ENCODE measurements at regions of chr20 and their contacts with region 1.

Region 1: DNA sequence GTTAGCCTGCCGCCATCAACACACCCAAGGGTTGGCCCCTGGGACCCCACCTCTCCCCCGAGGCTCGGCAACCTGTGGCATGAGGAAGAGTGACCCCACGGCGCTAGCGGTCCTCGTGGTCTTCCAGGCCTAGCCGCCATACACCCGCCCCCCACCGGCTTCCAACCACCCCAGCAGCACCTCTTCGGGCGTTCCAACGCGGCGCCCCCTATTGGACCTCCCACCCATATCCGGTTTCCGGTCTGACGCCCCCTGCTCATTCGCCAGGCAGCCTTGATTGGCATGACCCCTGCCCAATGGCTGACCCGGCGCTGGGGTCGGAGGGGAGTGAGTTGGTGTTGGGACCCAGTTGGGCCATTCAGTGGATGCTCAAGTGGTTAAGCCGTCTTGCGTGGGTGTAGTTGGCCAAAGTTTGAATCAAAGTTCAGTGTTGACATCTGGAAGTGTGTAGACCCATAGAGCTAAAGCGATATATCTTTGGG is at the start of gene GNAS-AS1:
- DNase-seq: peak; percentile 82
- H3K4me3 ChIP-seq: peak within 1 kb of the TSS; percentile 82
- H3K27ac ChIP-seq: no peak within 1 kb of the TSS
- H3K4me1 ChIP-seq: peaks cover 3% of the 10 kb centered on the region; the same call in 1 of the 2 replicates
- H3K27me3 ChIP-seq: no peaks in the 10 kb centered on the region
- total RNA-seq, gene GNAS-AS1: 0.25 and 0.97 TPM in 2 replicates

Region 2: DNA sequence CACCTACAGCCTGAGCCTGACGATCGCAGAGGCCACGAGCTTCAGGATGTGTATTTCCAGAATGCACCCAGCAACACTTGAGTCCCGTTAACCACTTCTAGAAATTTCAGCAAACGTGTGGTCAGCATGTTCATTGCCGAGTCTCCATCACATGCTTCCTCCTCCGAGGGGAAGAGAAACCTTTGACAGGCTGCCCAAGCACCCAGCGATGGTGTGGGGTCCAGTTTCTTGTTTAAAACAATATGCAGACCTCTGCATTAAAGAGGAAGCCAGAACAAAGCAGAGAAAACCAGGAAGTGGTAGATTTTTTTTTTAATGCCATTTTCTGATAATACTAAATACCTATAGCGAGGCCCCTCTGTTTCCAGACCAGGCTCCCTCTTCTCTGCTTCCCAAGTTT is 72.0 kb before region 1 on chr20:
- in situ Hi-C with region 1: no loop called
- DNase-seq: no peak
- H3K4me3 ChIP-seq: no peak overlapping the region
- H3K27ac ChIP-seq: no peak overlapping the region
- H3K4me1 ChIP-seq: no peaks in the 10 kb centered on the region
- H3K27me3 ChIP-seq: peaks cover 49% of the 10 kb centered on the region

Region 3: DNA sequence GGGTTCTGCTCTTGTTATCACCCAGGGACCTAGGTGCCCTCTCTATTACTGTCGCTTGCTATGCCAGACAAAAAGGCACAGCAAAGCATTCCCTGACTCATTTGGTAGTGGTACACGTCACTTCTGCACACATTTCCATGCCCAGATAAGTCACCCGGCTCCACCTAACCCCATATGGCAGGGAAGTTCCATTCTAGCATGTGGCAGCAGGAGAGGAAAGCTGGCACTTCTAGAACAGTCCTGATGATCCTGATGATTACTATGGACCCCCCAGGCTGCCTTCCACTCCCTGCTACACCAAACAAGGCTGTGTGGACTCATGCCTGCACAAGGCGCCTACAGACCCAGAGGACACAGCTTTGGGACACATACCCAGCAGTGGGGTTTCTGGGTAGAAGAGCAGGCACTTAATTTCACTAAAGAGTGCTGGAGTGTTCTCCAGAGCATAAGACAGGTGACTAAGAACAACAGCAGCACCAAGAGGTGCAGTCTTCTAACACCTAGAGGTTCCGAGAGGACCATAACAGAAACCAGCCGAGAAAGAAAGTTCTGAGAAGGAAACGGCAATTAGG is 76.8 kb after region 1 on chr20:
- in situ Hi-C with region 1: no loop called
- DNase-seq: no peak
- H3K4me3 ChIP-seq: no peak overlapping the region
- H3K27ac ChIP-seq: no peak overlapping the region
- H3K4me1 ChIP-seq: no peaks in the 10 kb centered on the region
- H3K27me3 ChIP-seq: no peaks in the 10 kb centered on the region

Region 4: GRCh38 chr20:59455402-59456341 is 604.9 kb after region 1 on chr20:
- in situ Hi-C with region 1: loop called (anchors 25 kb)
- DNase-seq: peak; percentile 63
- H3K4me3 ChIP-seq: no peak overlapping the region
- H3K27ac ChIP-seq: no peak overlapping the region
- H3K4me1 ChIP-seq: no peaks in the 10 kb centered on the region
- H3K27me3 ChIP-seq: no peaks in the 10 kb centered on the region; the same call in none of the 2 replicates